ENCODE measurements at regions of chr16 and their contacts with region 1.

Region 1: DNA sequence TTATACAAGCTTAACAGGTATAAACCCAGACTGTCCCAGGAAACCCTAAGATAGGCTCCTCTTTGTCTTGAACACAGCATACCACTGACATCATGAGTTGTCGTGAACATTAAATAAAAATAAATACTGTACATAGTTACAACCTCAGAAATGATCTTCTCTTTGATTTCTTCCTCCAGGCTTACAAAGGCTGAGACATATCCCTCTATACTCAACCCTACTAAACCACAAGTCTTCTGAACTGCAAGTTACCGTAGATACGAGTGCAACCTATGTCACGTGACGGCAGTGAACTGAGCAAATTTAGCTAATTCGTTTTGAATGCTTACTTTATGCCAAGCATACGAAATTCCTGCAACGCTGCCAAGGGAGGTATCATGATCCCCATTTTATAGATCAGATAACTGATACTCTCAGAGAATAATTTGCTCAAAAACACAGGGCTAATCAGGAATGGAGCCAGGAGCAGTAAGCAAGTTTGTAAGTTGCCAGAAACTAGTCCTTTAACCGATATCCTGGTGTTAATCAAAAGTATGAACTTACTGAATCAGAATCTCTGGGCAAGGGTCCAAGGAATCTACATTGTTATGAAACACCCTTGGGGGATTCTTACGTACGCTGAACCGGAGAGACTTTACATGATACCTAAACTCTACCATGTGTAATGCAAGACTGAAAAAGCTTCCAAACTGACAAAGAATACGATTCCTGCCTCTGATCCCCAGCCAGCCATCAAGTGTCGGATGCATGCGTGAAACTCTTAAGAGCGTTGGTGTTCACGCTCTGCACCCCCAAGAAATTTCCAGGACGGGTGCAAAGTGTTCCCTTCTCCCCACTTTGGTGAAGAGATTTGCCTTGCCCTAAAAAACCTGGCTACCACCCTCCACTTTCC is 106.2 kb downstream of the XYLT1 start:
- DNase-seq: peak in 33 of 35 experiments; percentile 37 to 90 (median 69)
- ATAC-seq: peak; percentile 84 to 90 (median 84)
- H3K4me3 ChIP-seq: peak overlapping the region; percentile 8 to 26
- H3K4me3 Mint-ChIP-seq: peak overlapping the region; percentile 61 to 88 (median 68)
- H3K27ac ChIP-seq: peak overlapping the region; percentile 98
- H3K27ac Mint-ChIP-seq: peak overlapping the region; percentile 98 to 100
- H3K4me1 ChIP-seq: peaks cover 78 to 95% of the 10 kb centered on the region in 2 experiments
- H3K4me1 Mint-ChIP-seq: peaks cover 98 to 100% (median 99%) of the 10 kb centered on the region in 3 donors
- H3K27me3 ChIP-seq: no peaks in the 10 kb centered on the region
- H3K27me3 Mint-ChIP-seq: no peaks in the 10 kb centered on the region

Region 2: GRCh38 chr16:17211797-17212196 is 152.8 kb before region 1 on chr16:
- CTCF ChIA-PET with region 1: no interaction called
- POLR2A ChIA-PET with region 1: no interaction called
- DNase-seq: peak in 33 of 35 experiments; percentile 4 to 57 (median 26)
- ATAC-seq: peak; percentile 50 to 66 (median 58)
- H3K4me3 ChIP-seq: no peak overlapping the region
- H3K4me3 Mint-ChIP-seq: no peak overlapping the region
- H3K27ac ChIP-seq: no peak overlapping the region
- H3K27ac Mint-ChIP-seq: no peak overlapping the region
- H3K4me1 ChIP-seq: peaks cover 0 to 11% of the 10 kb centered on the region in 2 experiments
- H3K4me1 Mint-ChIP-seq: peaks cover 15 to 26% (median 21%) of the 10 kb centered on the region in 3 donors
- H3K27me3 ChIP-seq: no peaks in the 10 kb centered on the region
- H3K27me3 Mint-ChIP-seq: no peaks in the 10 kb centered on the region

Region 3: GRCh38 chr16:17397499-17397891 is 32.9 kb after region 1 on chr16:
- CTCF ChIA-PET with region 1: interaction called in 1 of 2 experiments, 11 read pairs
- POLR2A ChIA-PET with region 1: interaction called in 1 of 2 experiments, 6 read pairs
- DNase-seq: peak in 3 of 35 experiments; percentile 11 to 56 (median 36)
- ATAC-seq: peak in 2 of 4 experiments; percentile 18 to 25
- H3K4me3 ChIP-seq: no peak overlapping the region
- H3K4me3 Mint-ChIP-seq: peak overlapping the region in 1 of 3 donors; percentile 28
- H3K27ac ChIP-seq: peak overlapping the region; percentile 97
- H3K27ac Mint-ChIP-seq: peak overlapping the region; percentile 91 to 98
- H3K4me1 ChIP-seq: peaks cover 0 to 51% of the 10 kb centered on the region in 2 experiments
- H3K4me1 Mint-ChIP-seq: peaks cover 49 to 81% (median 67%) of the 10 kb centered on the region in 3 donors
- H3K27me3 ChIP-seq: no peaks in the 10 kb centered on the region
- H3K27me3 Mint-ChIP-seq: no peaks in the 10 kb centered on the region

Region 4: DNA sequence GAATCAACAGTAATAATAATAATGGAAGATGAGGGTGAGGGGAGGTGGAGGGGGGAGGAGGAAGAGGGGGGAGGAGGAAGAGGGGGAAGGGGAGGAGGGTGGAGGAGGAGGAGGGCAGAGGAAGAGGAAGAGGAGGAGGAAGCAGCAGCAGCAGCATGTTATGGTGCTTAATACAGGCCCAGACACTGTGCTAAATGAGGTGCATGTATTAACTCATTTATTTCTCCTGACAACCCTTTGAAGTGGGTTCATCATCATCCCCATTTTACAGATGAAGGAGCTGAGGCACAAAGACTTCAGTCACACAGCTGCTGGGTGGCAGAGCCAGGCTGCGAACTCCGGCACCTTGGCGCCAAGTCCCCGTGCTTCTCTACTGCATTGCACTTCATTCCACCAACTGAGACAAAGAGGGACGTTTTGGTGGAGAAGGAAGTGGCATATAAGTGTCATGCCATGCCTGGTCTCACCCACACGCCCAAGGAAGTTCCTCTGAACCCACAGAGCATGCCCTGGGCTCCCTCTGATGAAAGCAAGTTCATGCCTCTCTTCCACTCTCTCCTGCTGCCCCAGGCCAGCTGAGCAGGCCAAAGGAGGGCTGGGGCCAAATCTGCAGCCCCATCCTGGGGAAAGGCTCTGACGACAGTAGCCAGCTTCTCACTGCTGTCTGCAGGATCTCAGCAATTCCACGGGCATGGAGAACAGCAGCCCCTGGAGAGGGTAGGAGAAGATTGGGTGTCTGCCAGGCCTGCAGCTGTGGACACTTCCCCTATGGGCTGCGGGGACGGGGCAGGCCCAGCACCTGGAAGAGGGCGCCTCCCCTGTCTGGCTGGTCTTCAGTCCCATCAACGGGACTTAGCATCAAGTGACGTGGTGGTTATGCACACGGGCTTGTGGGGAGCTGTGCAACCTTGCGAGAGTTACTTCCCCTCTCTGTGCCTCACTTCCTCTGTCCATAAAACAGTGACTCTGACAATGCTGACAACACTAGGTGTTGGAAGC is 84.4 kb after region 1 on chr16:
- CTCF ChIA-PET with region 1: no interaction called
- POLR2A ChIA-PET with region 1: interaction called in 1 of 2 experiments, 13 read pairs
- DNase-seq: peak in 29 of 35 experiments; percentile 10 to 73 (median 35)
- ATAC-seq: peak; percentile 74 to 81 (median 77)
- H3K4me3 ChIP-seq: peak overlapping the region in 1 of 2 donors; percentile 25
- H3K4me3 Mint-ChIP-seq: peak overlapping the region in 2 of 3 donors; percentile 43 to 62
- H3K27ac ChIP-seq: peak overlapping the region; percentile 77
- H3K27ac Mint-ChIP-seq: peak overlapping the region; percentile 83 to 90
- H3K4me1 ChIP-seq: peaks cover 23 to 58% of the 10 kb centered on the region in 2 experiments
- H3K4me1 Mint-ChIP-seq: peaks cover 55 to 73% (median 57%) of the 10 kb centered on the region in 3 donors
- H3K27me3 ChIP-seq: no peaks in the 10 kb centered on the region
- H3K27me3 Mint-ChIP-seq: no peaks in the 10 kb centered on the region

Measured in T-cell (primary cell).